Activated CD4-positive, alpha-beta memory T cell treated with anti-CD3 and anti-CD28 coated beads for 36 hours (primary cell): ENCODE measurements at regions of chr5 and their contacts with region 1.

Region 1: GRCh38 chr5:112976432-112977309 is at the start of gene DCP2:
- DNase-seq: peak; percentile 97
- H3K4me3 Mint-ChIP-seq: peak within 1 kb of the TSS; percentile 85
- H3K27ac Mint-ChIP-seq: peak within 1 kb of the TSS; percentile 98
- H3K4me1 Mint-ChIP-seq: peaks cover 39% of the 10 kb centered on the region
- H3K27me3 Mint-ChIP-seq: no peaks in the 10 kb centered on the region
- total RNA-seq, gene DCP2: 102 TPM

Region 2: DNA sequence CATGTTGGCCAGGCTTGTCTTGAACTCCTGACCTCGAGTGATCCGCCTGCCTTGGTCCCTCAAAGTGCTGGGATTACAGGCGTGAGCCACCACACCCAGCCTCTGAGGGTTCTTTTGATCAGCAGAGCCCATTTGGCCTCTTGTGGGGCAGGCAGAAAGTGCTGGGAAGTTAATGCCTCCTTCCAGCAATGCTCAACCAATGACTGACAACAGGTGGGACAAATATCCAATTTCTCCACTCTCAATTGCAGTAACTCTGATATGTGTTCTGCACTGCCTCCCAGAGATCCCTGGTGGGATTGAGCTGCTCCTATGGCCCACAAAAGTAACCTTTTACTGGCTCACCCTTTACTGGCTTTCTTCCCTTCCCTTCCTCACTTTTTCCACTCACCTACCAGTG is 318.9 kb before region 1 on chr5:
- CTCF ChIA-PET with region 1: no interaction called
- POLR2A ChIA-PET with region 1: no interaction called
- intact Hi-C with region 1: no loop called
- DNase-seq: no peak
- H3K4me3 Mint-ChIP-seq: no peak overlapping the region
- H3K27ac Mint-ChIP-seq: no peak overlapping the region
- H3K4me1 Mint-ChIP-seq: no peaks in the 10 kb centered on the region
- H3K27me3 Mint-ChIP-seq: peaks cover 7% of the 10 kb centered on the region

Region 3: DNA sequence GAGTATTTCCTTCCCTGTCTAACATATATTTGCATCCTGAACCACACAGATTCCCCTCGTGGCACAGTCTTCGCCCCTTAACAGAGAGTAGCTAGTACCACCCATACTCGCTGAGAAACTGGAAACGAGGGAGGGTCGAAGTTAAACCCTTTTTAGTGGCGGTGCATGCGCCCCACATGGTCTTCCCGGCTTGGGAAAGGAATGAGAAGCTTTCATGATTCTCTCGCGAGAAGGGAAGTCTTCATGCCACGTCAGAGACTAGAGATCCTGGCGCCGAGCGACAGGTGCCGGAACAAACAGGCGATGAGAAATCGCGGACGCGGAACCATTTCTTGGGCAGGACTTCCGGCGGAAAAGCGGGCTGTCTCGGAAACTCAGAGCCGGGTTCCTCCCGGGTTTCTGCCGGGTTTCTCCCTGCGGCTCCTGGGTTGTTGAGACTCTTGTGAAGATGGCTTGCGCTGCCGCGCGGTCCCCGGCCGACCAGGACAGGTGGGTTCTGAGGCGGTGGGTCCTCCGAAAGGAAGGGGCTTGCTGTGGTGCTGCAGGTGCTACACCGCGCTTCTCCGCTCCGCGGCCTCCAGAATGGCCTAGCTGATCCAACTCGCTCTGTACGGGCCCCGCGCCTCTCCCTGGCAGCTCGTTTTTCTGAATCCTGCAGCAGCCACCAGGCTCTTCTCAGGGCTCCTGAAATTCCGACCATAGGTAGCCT is 115.6 kb before region 1 on chr5 and contains the start of gene SRP19:
- CTCF ChIA-PET with region 1: no interaction called
- POLR2A ChIA-PET with region 1: no interaction called
- intact Hi-C with region 1: loop called (anchors 2 kb)
- DNase-seq: peak; percentile 95
- H3K4me3 Mint-ChIP-seq: peak within 1 kb of the TSS; percentile 86
- H3K27ac Mint-ChIP-seq: peak within 1 kb of the TSS; percentile 95
- H3K4me1 Mint-ChIP-seq: peaks cover 33% of the 10 kb centered on the region
- H3K27me3 Mint-ChIP-seq: peaks cover 3% of the 10 kb centered on the region
- total RNA-seq, gene SRP19: 49.1 to 51.6 TPM

Region 4: GRCh38 chr5:112878760-112879159 is 97.9 kb before region 1 on chr5:
- CTCF ChIA-PET with region 1: no interaction called
- POLR2A ChIA-PET with region 1: interaction called, 3 read pairs
- intact Hi-C with region 1: loop called (anchors 5 kb)
- DNase-seq: peak; percentile 79
- H3K4me3 Mint-ChIP-seq: peak overlapping the region; percentile 5
- H3K27ac Mint-ChIP-seq: peak overlapping the region; percentile 84
- H3K4me1 Mint-ChIP-seq: peaks cover 35% of the 10 kb centered on the region
- H3K27me3 Mint-ChIP-seq: no peaks in the 10 kb centered on the region

Region 5: DNA sequence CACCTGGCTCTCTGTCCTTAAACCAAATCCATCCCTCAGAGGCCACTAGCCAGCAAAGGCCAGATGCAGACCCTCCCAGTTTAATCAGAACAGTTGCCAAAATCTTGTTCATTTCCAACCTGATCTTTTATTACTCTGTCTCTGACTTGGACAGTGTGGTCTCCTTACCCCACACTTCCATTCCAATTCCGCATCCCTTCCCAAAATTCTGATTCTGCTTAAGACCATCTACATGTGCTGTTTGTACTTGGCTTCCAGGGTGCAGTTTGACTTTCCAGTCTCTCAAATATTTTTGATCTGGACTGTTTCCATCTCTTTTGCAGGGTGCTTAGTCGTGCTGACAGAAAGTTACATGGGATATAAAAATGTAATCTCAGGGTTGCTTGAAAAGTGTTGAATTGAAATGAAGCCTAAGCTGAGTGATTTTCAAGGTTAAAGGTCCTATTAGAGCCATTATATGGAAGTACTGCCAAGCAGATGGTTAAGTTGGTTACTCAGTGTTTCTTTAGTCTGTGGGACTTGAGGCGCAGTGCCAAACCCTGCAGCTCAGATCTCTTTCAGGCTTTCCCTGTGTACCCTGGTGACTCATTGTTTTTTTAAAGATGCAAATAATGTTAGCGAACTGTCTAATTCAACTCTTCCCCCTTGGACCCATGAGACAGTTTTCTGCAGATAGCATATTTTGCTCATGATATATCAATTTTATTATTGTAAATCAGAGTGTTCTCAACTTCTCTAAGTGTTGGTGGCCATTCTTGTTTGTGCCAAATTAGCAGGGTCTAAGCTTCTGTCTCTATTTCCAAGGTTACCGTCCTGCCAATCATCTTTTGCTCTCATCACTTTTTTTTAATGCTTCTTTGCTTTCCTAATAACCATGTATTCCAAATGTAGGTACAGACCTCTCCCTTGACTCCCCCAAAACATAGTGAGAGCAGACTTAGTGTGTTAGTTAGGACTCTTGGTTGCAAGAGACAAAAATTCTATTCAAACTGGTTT is 18.3 kb before region 1 on chr5:
- CTCF ChIA-PET with region 1: interaction called, 4 read pairs
- POLR2A ChIA-PET with region 1: interaction called, 10 read pairs
- intact Hi-C with region 1: no loop called
- DNase-seq: peak; percentile 61
- H3K4me3 Mint-ChIP-seq: no peak overlapping the region
- H3K27ac Mint-ChIP-seq: no peak overlapping the region
- H3K4me1 Mint-ChIP-seq: peaks cover 29% of the 10 kb centered on the region
- H3K27me3 Mint-ChIP-seq: peaks cover 5% of the 10 kb centered on the region

Region 6: DNA sequence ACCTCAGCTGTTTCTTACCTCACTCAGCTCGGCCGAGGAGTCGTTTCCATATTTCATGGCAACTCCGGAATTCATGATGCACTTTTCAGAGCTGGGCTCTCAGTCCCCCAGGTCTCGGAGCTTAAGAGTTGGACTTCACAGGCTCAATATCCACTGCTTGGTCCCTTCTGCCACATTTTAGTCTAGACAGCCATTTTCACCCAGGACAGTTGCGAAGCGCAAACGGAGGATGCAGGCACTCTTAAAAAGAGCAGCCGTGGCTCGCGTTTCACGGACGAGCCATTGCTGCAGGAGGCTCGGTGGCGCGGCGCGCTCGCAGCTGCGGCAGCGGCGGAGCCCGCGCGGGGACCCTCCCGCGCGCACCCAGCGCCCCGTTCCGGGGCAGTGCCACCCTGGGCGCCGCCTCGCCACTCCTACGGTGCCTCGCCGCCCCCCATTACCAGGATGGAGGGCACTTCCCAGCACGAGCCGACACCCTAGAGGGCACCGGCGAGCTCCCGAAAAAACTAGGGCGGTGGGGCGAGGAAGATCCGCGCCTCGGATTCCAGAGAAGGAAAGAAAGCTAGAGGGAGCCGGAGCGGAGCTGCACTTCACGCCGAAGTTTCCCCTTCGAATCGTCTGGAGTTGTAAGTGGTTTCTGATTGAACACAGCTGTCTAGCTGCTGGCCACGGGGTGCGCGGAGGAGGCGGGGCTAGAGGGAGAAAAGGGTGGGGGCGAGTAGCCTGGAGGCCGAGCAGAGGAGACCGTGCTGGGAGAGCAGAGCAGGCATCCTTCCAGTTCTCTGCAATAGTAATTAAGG is 317.8 kb after region 1 on chr5:
- CTCF ChIA-PET with region 1: interaction called, 3 read pairs
- POLR2A ChIA-PET with region 1: no interaction called
- intact Hi-C with region 1: loop called (anchors 5 kb)
- DNase-seq: peak; percentile 88
- H3K4me3 Mint-ChIP-seq: peak overlapping the region; percentile 89
- H3K27ac Mint-ChIP-seq: peak overlapping the region; percentile 55
- H3K4me1 Mint-ChIP-seq: peaks cover 16% of the 10 kb centered on the region
- H3K27me3 Mint-ChIP-seq: peaks cover 13% of the 10 kb centered on the region

Region 7: DNA sequence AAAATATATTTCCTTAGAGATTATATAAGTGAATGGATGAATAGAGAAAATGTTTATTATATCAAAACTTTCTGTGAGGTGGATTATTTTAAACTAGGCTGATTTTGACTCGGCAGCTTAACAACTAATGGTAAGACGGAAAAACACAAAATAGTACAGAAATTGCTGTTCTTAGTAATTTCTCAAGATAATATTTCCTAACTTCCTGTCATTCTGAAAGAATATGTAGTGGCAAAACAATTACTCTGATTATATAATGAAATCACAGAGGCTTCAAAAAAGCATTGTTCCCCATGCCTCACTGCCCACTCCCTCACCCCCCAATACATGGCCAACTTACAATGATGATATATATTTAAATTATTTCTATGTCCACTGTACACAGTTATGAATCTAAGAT is 622.3 kb after region 1 on chr5:
- CTCF ChIA-PET with region 1: no interaction called
- POLR2A ChIA-PET with region 1: no interaction called
- intact Hi-C with region 1: no loop called
- DNase-seq: no peak
- H3K4me3 Mint-ChIP-seq: no peak overlapping the region
- H3K27ac Mint-ChIP-seq: no peak overlapping the region
- H3K4me1 Mint-ChIP-seq: no peaks in the 10 kb centered on the region
- H3K27me3 Mint-ChIP-seq: no peaks in the 10 kb centered on the region